Common myeloid progenitor, CD34-positive (primary cell): ENCODE measurements at regions of chr3 and their contacts with region 1.

Region 1: GRCh38 chr3:101803173-101803782 is 24.3 kb downstream of the NXPE3 start:
- DNase-seq: peak; percentile 80 to 95 (median 91)
- H3K4me3 ChIP-seq: peak overlapping the region in 1 of 7 experiments; percentile 51
- H3K27ac ChIP-seq: no peak overlapping the region
- H3K4me1 ChIP-seq: peaks cover 0 to 4% (median 0%) of the 10 kb centered on the region in 4 experiments
- H3K27me3 ChIP-seq: no peaks in the 10 kb centered on the region

Region 2: GRCh38 chr3:101333883-101334282 is 469.4 kb before region 1 on chr3:
- CTCF ChIA-PET with region 1: no interaction called
- POLR2A ChIA-PET with region 1: no interaction called
- DNase-seq: no peak
- H3K4me3 ChIP-seq: no peak overlapping the region
- H3K27ac ChIP-seq: no peak overlapping the region
- H3K4me1 ChIP-seq: no peaks in the 10 kb centered on the region
- H3K27me3 ChIP-seq: no peaks in the 10 kb centered on the region

Region 3: DNA sequence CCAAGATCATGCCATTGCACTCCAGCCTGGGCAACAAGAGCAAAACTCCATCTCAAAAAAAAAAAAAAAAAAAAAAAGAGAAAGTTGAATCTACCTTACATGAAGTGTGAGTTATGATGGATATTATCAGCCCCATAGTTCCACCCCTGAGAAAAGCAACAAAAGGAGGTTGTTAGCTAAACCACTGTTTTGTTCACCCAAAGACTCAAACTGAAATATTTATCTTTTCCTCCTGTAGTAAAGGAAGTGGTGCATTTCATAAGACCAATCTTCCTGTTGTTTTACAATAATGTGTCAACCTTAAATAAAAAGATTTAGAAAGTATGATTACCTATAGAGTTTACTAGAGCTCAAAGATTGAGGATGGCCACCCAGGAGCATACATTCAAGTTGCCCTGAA is 260.3 kb before region 1 on chr3:
- CTCF ChIA-PET with region 1: no interaction called
- POLR2A ChIA-PET with region 1: no interaction called
- DNase-seq: peak in 1 of 3 donors; percentile 31
- H3K4me3 ChIP-seq: no peak overlapping the region
- H3K27ac ChIP-seq: peak overlapping the region in 1 of 2 experiments; percentile 14
- H3K4me1 ChIP-seq: peaks cover 0 to 12% (median 3%) of the 10 kb centered on the region in 4 experiments
- H3K27me3 ChIP-seq: no peaks in the 10 kb centered on the region

Region 4: GRCh38 chr3:101665851-101666250 is 137.4 kb before region 1 on chr3:
- CTCF ChIA-PET with region 1: no interaction called
- POLR2A ChIA-PET with region 1: no interaction called
- DNase-seq: no peak
- H3K4me3 ChIP-seq: no peak overlapping the region
- H3K27ac ChIP-seq: no peak overlapping the region
- H3K4me1 ChIP-seq: no peaks in the 10 kb centered on the region
- H3K27me3 ChIP-seq: no peaks in the 10 kb centered on the region

Region 5: GRCh38 chr3:101784855-101785613 is 18.2 kb before region 1 on chr3:
- CTCF ChIA-PET with region 1: interaction called, 12 read pairs
- POLR2A ChIA-PET with region 1: no interaction called
- DNase-seq: peak in 2 of 3 donors; percentile 40 to 43
- H3K4me3 ChIP-seq: peak overlapping the region in 2 of 7 experiments; percentile 13 to 55
- H3K27ac ChIP-seq: peak overlapping the region; percentile 23 to 39
- H3K4me1 ChIP-seq: peaks cover 15 to 25% (median 17%) of the 10 kb centered on the region in 4 experiments
- H3K27me3 ChIP-seq: no peaks in the 10 kb centered on the region

Region 6: DNA sequence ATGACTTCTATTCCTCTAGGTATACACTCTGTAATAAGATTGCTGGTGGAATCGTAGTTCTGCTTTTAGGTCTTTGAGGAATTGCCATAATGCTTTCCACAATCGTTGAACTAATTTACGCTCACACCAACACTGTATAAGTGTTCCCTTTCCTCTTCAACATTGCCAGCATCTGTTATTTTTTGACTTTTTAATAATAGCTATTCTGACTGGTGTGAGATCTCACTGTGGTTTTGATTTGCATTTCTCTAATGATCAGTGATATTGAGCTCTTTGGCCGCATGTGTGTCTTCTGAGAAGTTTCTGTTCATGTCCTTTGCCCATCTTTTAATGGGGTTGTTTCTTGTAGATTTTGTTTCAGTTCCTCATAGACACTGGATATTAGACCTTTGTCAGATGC is 11.5 kb before region 1 on chr3:
- CTCF ChIA-PET with region 1: interaction called, 11 read pairs
- POLR2A ChIA-PET with region 1: no interaction called
- DNase-seq: no peak
- H3K4me3 ChIP-seq: no peak overlapping the region
- H3K27ac ChIP-seq: no peak overlapping the region
- H3K4me1 ChIP-seq: no peaks in the 10 kb centered on the region
- H3K27me3 ChIP-seq: no peaks in the 10 kb centered on the region